Activated T-helper 2 cell treated with anti-CD3 and anti-CD28 coated beads, Interferon-gamma antibody, Interleukin-2, Interleukin-4, amounts not matched to agents 10 μg/mL and 5 μg/mL and 100 μg/mL, durations not matched to agents 14 hours and 24 hours and 36 hours (primary cell): ENCODE measurements at regions of chr13 and their contacts with region 1.

Region 1: GRCh38 chr13:90984756-90985155 is 362.7 kb upstream of the MIR17HG start:
- DNase-seq: no peak
- H3K4me3 Mint-ChIP-seq: no peak overlapping the region
- H3K27ac Mint-ChIP-seq: no peak overlapping the region
- H3K4me1 Mint-ChIP-seq: no peaks in the 10 kb centered on the region
- H3K27me3 Mint-ChIP-seq: no peaks in the 10 kb centered on the region

Region 2: GRCh38 chr13:91045351-91046034 is 60.7 kb after region 1 on chr13:
- intact Hi-C with region 1: loop called (anchors 10 kb)
- DNase-seq: no peak
- H3K4me3 Mint-ChIP-seq: no peak overlapping the region
- H3K27ac Mint-ChIP-seq: no peak overlapping the region
- H3K4me1 Mint-ChIP-seq: no peaks in the 10 kb centered on the region
- H3K27me3 Mint-ChIP-seq: no peaks in the 10 kb centered on the region